Transverse colon (tissue), 4 donors: ENCODE measurements at regions of chr19 and their contacts with region 1.

Region 1: GRCh38 chr19:53775524-53775923 is 48.6 kb downstream of the NLRP12 start:
- DNase-seq: no peak
- H3K4me3 ChIP-seq: no peak overlapping the region
- H3K27ac ChIP-seq: no peak overlapping the region
- H3K4me1 ChIP-seq: no peaks in the 10 kb centered on the region
- H3K27me3 ChIP-seq: peaks cover 5% of the 10 kb centered on the region
- CTCF ChIP-seq: no peak
- EP300 ChIP-seq: no peak
- POLR2A ChIP-seq: no peak

Region 2: DNA sequence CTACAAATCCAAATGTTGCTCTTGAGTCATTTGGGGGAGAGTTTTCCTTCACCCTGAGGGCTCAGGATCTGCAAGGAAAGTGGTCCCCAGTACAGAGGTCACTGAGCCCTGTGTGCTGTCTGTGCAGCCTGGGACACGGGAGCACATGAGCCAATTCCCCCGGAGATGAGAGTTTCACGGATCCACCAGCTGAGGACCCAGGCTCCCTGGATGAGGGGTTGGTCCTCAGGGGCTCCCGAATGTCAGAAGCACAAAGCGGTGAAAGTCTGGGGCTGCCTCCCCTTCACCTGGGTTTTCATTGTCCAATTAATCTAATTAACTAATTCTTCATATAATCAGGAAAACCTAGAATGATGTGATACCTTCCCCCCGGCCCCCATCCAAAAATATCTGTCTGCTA is 519.0 kb after region 1 on chr19:
- in situ Hi-C with region 1: no loop called
- intact Hi-C with region 1: loop called (anchors 5 kb)
- DNase-seq: no peak
- H3K4me3 ChIP-seq: no peak overlapping the region
- H3K27ac ChIP-seq: no peak overlapping the region
- H3K4me1 ChIP-seq: no peaks in the 10 kb centered on the region
- H3K27me3 ChIP-seq: no peaks in the 10 kb centered on the region
- CTCF ChIP-seq: no peak
- EP300 ChIP-seq: no peak
- POLR2A ChIP-seq: no peak